ENCODE measurements at regions of chr6 and their contacts with region 1.

Region 1: GRCh38 chr6:33200219-33201146 is at the starts of genes RXRB and SLC39A7:
- DNase-seq: peak; percentile 100
- ATAC-seq: peak; percentile 74
- H3K4me3 ChIP-seq: peak within 1 kb of the TSS; percentile 83 to 99 (median 95)
- H3K4me3 Mint-ChIP-seq: peak within 1 kb of the TSS; percentile 99
- H3K27ac ChIP-seq: peak within 1 kb of the TSS; percentile 93 to 94
- H3K27ac Mint-ChIP-seq: peak within 1 kb of the TSS; percentile 99
- H3K4me1 ChIP-seq: peaks cover 30 to 57% of the 10 kb centered on the region in 2 donors
- H3K4me1 Mint-ChIP-seq: peaks cover 71% of the 10 kb centered on the region
- H3K27me3 ChIP-seq: no peaks in the 10 kb centered on the region
- H3K27me3 Mint-ChIP-seq: no peaks in the 10 kb centered on the region
- CTCF ChIP-seq: no peak
- total RNA-seq, gene RXRB: 94.1 and 99.9 TPM in 2 replicates
- total RNA-seq, gene SLC39A7: 26.1 and 29.6 TPM in 2 replicates

Region 2: GRCh38 chr6:32177788-32178546 is 1022.5 kb before region 1 on chr6 and contains the start of gene RNF5:
- CTCF ChIA-PET with region 1: no interaction called
- POLR2A ChIA-PET with region 1: no interaction called
- intact Hi-C with region 1: loop called (anchors 5 kb)
- DNase-seq: peak; percentile 99
- ATAC-seq: peak; percentile 79
- H3K4me3 ChIP-seq: peak within 1 kb of the TSS; percentile 68 to 92 (median 75)
- H3K4me3 Mint-ChIP-seq: peak within 1 kb of the TSS; percentile 97
- H3K27ac ChIP-seq: peak within 1 kb of the TSS; percentile 97 to 98
- H3K27ac Mint-ChIP-seq: peak within 1 kb of the TSS; percentile 99
- H3K4me1 ChIP-seq: peaks cover 34 to 47% of the 10 kb centered on the region in 2 donors
- H3K4me1 Mint-ChIP-seq: peaks cover 68% of the 10 kb centered on the region
- H3K27me3 ChIP-seq: no peaks in the 10 kb centered on the region
- H3K27me3 Mint-ChIP-seq: no peaks in the 10 kb centered on the region
- CTCF ChIP-seq: no peak
- total RNA-seq, gene RNF5: 39.0 and 40.7 TPM in 2 replicates

Region 3: DNA sequence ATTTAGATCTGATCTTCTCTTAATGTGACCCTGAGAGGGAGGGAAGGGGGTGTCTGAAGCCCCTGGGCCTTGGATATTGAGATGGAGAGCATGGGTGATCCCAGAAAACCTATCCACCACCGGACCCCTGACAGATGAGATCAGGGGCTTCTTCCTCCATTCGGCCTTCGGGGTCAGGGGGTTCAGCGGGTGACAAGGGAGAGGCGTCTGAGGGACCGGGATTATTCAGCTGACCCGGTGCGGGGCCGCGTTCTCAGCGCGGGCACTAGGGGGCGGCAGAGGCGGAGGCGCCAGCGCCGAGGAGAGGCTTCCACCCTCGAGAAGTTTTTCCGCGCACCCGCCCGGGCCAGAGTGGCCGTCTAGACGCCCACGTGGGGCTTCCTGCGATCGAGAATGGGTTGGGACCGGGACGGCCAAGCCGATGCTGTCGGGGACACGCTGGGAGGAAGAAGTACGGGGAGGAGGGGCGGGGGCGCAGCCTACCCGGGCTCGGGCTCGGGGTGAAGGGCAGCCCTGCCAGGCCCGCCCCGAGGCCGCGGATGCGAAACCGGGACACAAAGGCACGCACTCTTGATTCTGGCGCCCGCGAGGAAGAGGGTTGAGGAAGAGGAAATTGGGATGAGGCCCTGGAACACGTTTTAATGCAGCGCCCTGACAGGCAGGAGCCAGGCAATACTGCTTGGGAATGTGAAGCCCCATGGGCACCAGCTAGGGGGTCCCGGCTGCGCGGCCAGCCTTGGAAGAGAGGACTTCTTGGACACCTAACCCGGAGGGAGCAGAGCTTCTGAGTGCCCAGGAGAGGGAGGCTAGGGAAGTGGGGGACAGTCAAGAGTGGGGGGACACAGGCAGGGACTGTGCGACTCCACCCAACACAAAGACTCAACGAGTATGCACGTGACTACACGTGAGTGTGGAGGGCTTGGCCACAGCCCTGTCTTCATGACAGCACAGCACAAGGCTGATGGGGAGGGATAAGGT is 38.8 kb before region 1 on chr6:
- CTCF ChIA-PET with region 1: interaction called, 12 read pairs
- POLR2A ChIA-PET with region 1: no interaction called
- intact Hi-C with region 1: loop called (anchors 1 kb)
- DNase-seq: peak; percentile 87
- ATAC-seq: peak; percentile 97
- H3K4me3 ChIP-seq: peak overlapping the region in 4 of 5 experiments; percentile 52 to 68 (median 62)
- H3K4me3 Mint-ChIP-seq: peak overlapping the region; percentile 95
- H3K27ac ChIP-seq: peak overlapping the region in 1 of 2 donors; percentile 29
- H3K27ac Mint-ChIP-seq: peak overlapping the region; percentile 78
- H3K4me1 ChIP-seq: peaks cover 7 to 18% of the 10 kb centered on the region in 2 donors
- H3K4me1 Mint-ChIP-seq: peaks cover 17% of the 10 kb centered on the region
- H3K27me3 ChIP-seq: peaks cover 0 to 3% (median 0%) of the 10 kb centered on the region in 4 experiments
- H3K27me3 Mint-ChIP-seq: peaks cover 16% of the 10 kb centered on the region
- CTCF ChIP-seq: peak; percentile 93

Region 4: GRCh38 chr6:33288921-33289748 is 88.7 kb after region 1 on chr6 and contains the starts of genes PFDN6 and WDR46:
- CTCF ChIA-PET with region 1: interaction called, 3 read pairs
- POLR2A ChIA-PET with region 1: interaction called, 6 read pairs
- intact Hi-C with region 1: loop called (anchors 1 kb)
- DNase-seq: peak; percentile 93
- ATAC-seq: peak; percentile 96
- H3K4me3 ChIP-seq: peak within 1 kb of the TSS; percentile 78 to 99 (median 86)
- H3K4me3 Mint-ChIP-seq: peak within 1 kb of the TSS; percentile 93
- H3K27ac ChIP-seq: peak within 1 kb of the TSS; percentile 42 to 68
- H3K27ac Mint-ChIP-seq: peak within 1 kb of the TSS; percentile 86
- H3K4me1 ChIP-seq: peaks cover 19 to 25% of the 10 kb centered on the region in 2 donors
- H3K4me1 Mint-ChIP-seq: peaks cover 38% of the 10 kb centered on the region
- H3K27me3 ChIP-seq: no peaks in the 10 kb centered on the region
- H3K27me3 Mint-ChIP-seq: no peaks in the 10 kb centered on the region
- CTCF ChIP-seq: no peak
- total RNA-seq, gene PFDN6: 44.7 and 51.1 TPM in 2 replicates
- total RNA-seq, gene WDR46: 66.4 and 77.2 TPM in 2 replicates

Region 5: DNA sequence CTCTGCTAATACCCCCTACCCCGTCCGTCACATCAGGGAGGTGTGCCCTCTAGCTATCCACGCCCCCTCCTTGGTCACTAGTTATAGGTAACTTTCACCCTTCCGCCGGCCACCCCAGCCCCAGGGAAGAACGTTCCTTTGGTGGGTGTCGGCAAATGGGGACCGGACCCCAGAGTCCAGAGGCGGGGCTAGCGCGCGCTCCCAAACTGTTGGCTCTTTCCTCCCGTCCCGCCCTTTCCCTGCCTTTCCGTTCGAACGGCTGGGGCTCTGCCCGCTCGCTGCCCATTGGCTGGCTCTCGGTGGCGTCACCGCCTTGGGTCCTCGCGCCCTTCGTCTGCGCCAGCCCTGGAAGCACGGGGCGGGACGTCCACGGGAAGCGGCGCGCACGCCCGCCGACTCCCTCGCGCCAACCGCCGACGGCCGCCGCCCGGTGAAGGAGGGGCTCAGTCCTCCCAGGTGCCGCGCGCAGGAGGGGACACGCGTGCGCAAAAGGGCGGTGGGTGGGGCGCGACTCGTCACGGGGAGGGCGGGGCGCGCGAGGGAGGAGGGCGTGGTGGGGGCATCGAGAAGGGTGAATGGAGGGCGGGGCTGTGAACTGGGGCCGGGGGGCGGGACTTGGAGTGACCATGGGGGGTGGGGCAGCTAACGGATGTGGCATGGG is 209.7 kb after region 1 on chr6:
- CTCF ChIA-PET with region 1: no interaction called
- POLR2A ChIA-PET with region 1: interaction called, 6 read pairs
- intact Hi-C with region 1: loop called (anchors 1 kb)
- DNase-seq: peak; percentile 98
- ATAC-seq: peak; percentile 74
- H3K4me3 ChIP-seq: peak overlapping the region; percentile 63 to 91 (median 84)
- H3K4me3 Mint-ChIP-seq: peak overlapping the region; percentile 87
- H3K27ac ChIP-seq: peak overlapping the region; percentile 96 to 98
- H3K27ac Mint-ChIP-seq: peak overlapping the region; percentile 94
- H3K4me1 ChIP-seq: peaks cover 37 to 52% of the 10 kb centered on the region in 2 donors
- H3K4me1 Mint-ChIP-seq: peaks cover 47% of the 10 kb centered on the region
- H3K27me3 ChIP-seq: no peaks in the 10 kb centered on the region
- H3K27me3 Mint-ChIP-seq: no peaks in the 10 kb centered on the region
- CTCF ChIP-seq: no peak

Region 6: DNA sequence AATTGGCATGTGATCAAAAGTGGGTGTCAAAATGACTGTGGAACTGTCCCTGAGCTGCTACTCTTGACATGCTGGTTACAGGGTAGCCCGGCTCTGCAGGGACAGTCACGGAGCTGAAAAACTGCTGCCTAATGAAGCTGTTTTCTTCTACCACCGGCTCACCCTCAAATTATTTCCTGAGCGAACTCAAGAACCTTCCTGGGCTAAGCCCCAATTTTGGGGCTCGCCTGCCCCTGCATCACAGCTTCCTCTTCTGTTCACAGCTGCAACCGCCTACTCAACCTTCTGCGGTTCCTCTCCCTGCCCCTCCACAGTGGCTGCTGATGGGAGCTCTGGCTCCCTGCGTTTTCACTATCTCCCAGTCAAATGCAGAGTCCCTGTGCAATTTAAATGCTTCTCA is 714.2 kb after region 1 on chr6:
- CTCF ChIA-PET with region 1: no interaction called
- POLR2A ChIA-PET with region 1: no interaction called
- intact Hi-C with region 1: no loop called
- DNase-seq: peak; percentile 74
- ATAC-seq: peak; percentile 68
- H3K4me3 ChIP-seq: peak overlapping the region in 1 of 5 experiments; percentile 6
- H3K4me3 Mint-ChIP-seq: peak overlapping the region; percentile 72
- H3K27ac ChIP-seq: no peak overlapping the region
- H3K27ac Mint-ChIP-seq: no peak overlapping the region
- H3K4me1 ChIP-seq: peaks cover 19 to 24% of the 10 kb centered on the region in 2 donors
- H3K4me1 Mint-ChIP-seq: peaks cover 19% of the 10 kb centered on the region
- H3K27me3 ChIP-seq: peaks cover 0 to 3% (median 0%) of the 10 kb centered on the region in 4 experiments
- H3K27me3 Mint-ChIP-seq: peaks cover 12% of the 10 kb centered on the region
- CTCF ChIP-seq: no peak